ENCODE measurements at regions of chr3 and their contacts with region 1.

Region 1: GRCh38 chr3:10758304-10759061 is 57.5 kb upstream of the SLC6A11 start:
- DNase-seq: peak; percentile 31 to 63
- ATAC-seq: peak; percentile 77 to 89 (median 84)
- H3K4me3 ChIP-seq: no peak overlapping the region
- H3K27ac ChIP-seq: no peak overlapping the region
- H3K4me1 ChIP-seq: no peaks in the 10 kb centered on the region
- H3K27me3 ChIP-seq: peaks cover 0 to 24% (median 7%) of the 10 kb centered on the region in 3 donors
- CTCF ChIP-seq: peak; percentile 61

Region 2: GRCh38 chr3:10518506-10519150 is 239.9 kb before region 1 on chr3:
- intact Hi-C with region 1: no loop called
- DNase-seq: peak; percentile 49 to 79
- ATAC-seq: peak; percentile 92 to 96 (median 94)
- H3K4me3 ChIP-seq: no peak overlapping the region
- H3K27ac ChIP-seq: peak overlapping the region; percentile 89
- H3K4me1 ChIP-seq: peaks cover 35% of the 10 kb centered on the region
- H3K27me3 ChIP-seq: no peaks in the 10 kb centered on the region
- CTCF ChIP-seq: no peak

Region 3: DNA sequence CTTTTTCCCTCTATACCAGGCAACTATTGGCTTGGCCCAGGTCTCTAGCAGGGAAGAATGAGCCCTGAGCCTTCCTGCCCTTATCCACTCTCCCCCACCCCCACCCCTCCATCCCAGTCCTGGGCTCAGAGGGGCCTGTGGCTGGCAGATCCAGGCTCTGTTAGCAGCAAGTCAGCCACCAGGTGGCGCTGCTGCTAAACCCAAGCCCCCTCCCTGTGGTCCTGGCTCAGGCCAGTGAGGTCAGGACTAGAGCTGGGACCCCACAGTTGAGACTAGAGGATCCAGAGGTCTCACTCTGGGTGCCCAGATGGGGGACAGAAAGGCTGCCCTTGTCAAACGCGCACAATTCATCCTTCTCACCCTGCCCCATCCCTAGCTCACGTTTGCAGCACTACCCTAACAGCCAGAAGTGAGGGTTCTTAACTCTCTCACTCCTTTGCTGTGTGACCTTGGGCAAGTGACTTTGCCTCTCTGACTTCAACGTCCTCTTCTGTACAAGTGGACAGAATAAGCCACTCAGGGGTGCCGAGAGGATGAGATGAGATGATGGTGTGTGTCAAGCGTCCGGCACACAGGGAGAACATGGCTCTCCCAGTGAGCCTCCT is 187.3 kb after region 1 on chr3:
- intact Hi-C with region 1: loop called in 1 of 2 experiments (anchors 10 kb)
- DNase-seq: peak; percentile 68 to 80
- ATAC-seq: peak; percentile 61 to 89 (median 88)
- H3K4me3 ChIP-seq: no peak overlapping the region
- H3K27ac ChIP-seq: no peak overlapping the region
- H3K4me1 ChIP-seq: no peaks in the 10 kb centered on the region
- H3K27me3 ChIP-seq: peaks cover 0 to 4% (median 0%) of the 10 kb centered on the region in 3 donors
- CTCF ChIP-seq: peak; percentile 81

Region 4: GRCh38 chr3:11118181-11118682 is 359.7 kb after region 1 on chr3:
- intact Hi-C with region 1: no loop called
- DNase-seq: no peak
- ATAC-seq: peak in 1 of 4 donors; percentile 35
- H3K4me3 ChIP-seq: no peak overlapping the region
- H3K27ac ChIP-seq: no peak overlapping the region
- H3K4me1 ChIP-seq: no peaks in the 10 kb centered on the region
- H3K27me3 ChIP-seq: peaks cover 0 to 4% (median 1%) of the 10 kb centered on the region in 3 donors
- CTCF ChIP-seq: no peak